OCI-LY7 (cell line): ENCODE measurements at regions of chr21 and their contacts with region 1.

Region 1: GRCh38 chr21:16330082-16330907 is 600.5 kb downstream of the USP25 start:
- DNase-seq: peak; percentile 56
- H3K4me3 ChIP-seq: no peak overlapping the region
- H3K27ac ChIP-seq: no peak overlapping the region
- H3K4me1 ChIP-seq: no peaks in the 10 kb centered on the region
- CTCF ChIP-seq: peak; percentile 86

Region 2: DNA sequence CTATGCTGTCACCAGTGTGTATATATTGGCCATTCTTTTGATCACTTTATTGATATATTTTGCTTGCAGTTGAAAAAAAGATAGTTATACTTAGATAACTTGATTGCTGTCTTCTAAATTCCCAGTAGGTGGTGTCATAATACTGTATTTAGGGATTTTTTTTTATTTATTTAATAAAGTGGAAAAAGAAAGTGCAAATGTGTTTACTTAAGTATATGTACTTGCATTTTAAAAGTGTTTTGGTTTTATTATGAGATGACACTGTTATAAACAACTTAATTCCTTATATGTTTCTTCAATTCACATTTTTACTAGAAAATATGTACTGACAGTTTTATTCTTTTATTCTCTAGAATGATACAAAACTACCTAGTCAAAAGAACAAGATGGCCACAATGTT is 435.7 kb before region 1 on chr21:
- CTCF ChIA-PET with region 1: no interaction called
- POLR2A ChIA-PET with region 1: no interaction called
- intact Hi-C with region 1: loop called (anchors 5 kb)
- DNase-seq: no peak
- H3K4me3 ChIP-seq: no peak overlapping the region
- H3K27ac ChIP-seq: no peak overlapping the region
- H3K4me1 ChIP-seq: no peaks in the 10 kb centered on the region
- CTCF ChIP-seq: peak; percentile 69

Region 3: DNA sequence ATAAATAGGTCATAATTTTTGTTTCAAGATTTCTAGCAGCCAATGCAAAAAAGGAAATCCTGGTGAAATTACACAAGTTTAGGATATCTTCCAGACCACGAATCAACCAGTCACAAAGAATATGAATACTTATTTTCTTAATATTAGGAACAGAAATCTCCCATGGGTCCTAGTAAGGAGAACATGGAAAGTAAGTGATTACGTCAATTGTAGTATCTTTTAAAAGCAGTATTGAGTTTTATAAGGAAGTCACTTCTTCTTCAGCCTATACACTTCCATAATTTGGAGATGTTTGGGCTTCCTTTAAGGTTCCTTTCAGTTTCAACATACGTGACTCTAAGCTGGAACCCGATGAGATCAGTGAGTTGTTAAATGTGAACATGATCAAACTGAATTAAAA is 66.0 kb before region 1 on chr21:
- CTCF ChIA-PET with region 1: no interaction called
- POLR2A ChIA-PET with region 1: no interaction called
- intact Hi-C with region 1: no loop called
- DNase-seq: no peak
- H3K4me3 ChIP-seq: no peak overlapping the region
- H3K27ac ChIP-seq: no peak overlapping the region
- H3K4me1 ChIP-seq: no peaks in the 10 kb centered on the region
- CTCF ChIP-seq: no peak